ENCODE measurements at regions of chr12 and their contacts with region 1.

Region 1: GRCh38 chr12:3885277-3886094 is 12.3 kb upstream of the PARP11 start:
- DNase-seq: no peak
- H3K4me3 Mint-ChIP-seq: no peak overlapping the region
- H3K27ac Mint-ChIP-seq: no peak overlapping the region
- H3K4me1 Mint-ChIP-seq: peaks cover 14% of the 10 kb centered on the region
- H3K27me3 Mint-ChIP-seq: peaks cover 8% of the 10 kb centered on the region

Region 2: GRCh38 chr12:2550561-2551411 is 1334.7 kb before region 1 on chr12:
- intact Hi-C with region 1: no loop called
- DNase-seq: no peak
- H3K4me3 Mint-ChIP-seq: no peak overlapping the region
- H3K27ac Mint-ChIP-seq: no peak overlapping the region
- H3K4me1 Mint-ChIP-seq: no peaks in the 10 kb centered on the region
- H3K27me3 Mint-ChIP-seq: no peaks in the 10 kb centered on the region

Region 3: DNA sequence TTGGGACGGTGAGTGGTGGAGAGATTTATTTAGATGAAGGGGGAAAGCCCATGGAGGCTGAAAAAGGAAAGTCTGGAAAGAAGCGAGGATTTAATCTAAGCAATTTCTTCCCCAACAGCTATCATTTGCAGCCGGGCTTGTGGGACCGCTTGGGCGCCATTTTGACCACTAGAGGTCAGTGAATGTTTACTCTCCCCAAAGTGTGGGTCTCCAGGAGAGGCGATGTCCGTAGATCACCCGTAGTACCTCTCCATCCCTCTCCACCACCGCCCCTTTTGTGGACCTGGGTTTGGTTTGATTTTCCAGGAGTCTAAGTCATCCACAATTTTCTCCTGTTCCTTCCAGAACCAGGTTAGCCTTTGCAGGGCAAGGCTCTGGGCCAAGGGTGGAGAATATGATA is 79.0 kb after region 1 on chr12:
- intact Hi-C with region 1: loop called (anchors 2 kb)
- DNase-seq: no peak
- H3K4me3 Mint-ChIP-seq: no peak overlapping the region
- H3K27ac Mint-ChIP-seq: no peak overlapping the region
- H3K4me1 Mint-ChIP-seq: peaks cover 31% of the 10 kb centered on the region
- H3K27me3 Mint-ChIP-seq: no peaks in the 10 kb centered on the region

Region 4: GRCh38 chr12:3988519-3989448 is 103.3 kb after region 1 on chr12:
- intact Hi-C with region 1: loop called (anchors 5 kb)
- DNase-seq: no peak
- H3K4me3 Mint-ChIP-seq: peak overlapping the region; percentile 1
- H3K27ac Mint-ChIP-seq: peak overlapping the region; percentile 75
- H3K4me1 Mint-ChIP-seq: peaks cover 28% of the 10 kb centered on the region
- H3K27me3 Mint-ChIP-seq: peaks cover 20% of the 10 kb centered on the region

Region 5: GRCh38 chr12:4037747-4038312 is 152.3 kb after region 1 on chr12:
- intact Hi-C with region 1: loop called (anchors 1 kb)
- DNase-seq: no peak
- H3K4me3 Mint-ChIP-seq: no peak overlapping the region
- H3K27ac Mint-ChIP-seq: no peak overlapping the region
- H3K4me1 Mint-ChIP-seq: no peaks in the 10 kb centered on the region
- H3K27me3 Mint-ChIP-seq: peaks cover 27% of the 10 kb centered on the region

Region 6: GRCh38 chr12:4107436-4107878 is 222.0 kb after region 1 on chr12:
- intact Hi-C with region 1: loop called (anchors 5 kb)
- DNase-seq: peak; percentile 75
- H3K4me3 Mint-ChIP-seq: peak overlapping the region; percentile 10
- H3K27ac Mint-ChIP-seq: peak overlapping the region; percentile 73
- H3K4me1 Mint-ChIP-seq: peaks cover 53% of the 10 kb centered on the region
- H3K27me3 Mint-ChIP-seq: peaks cover 4% of the 10 kb centered on the region

Region 7: DNA sequence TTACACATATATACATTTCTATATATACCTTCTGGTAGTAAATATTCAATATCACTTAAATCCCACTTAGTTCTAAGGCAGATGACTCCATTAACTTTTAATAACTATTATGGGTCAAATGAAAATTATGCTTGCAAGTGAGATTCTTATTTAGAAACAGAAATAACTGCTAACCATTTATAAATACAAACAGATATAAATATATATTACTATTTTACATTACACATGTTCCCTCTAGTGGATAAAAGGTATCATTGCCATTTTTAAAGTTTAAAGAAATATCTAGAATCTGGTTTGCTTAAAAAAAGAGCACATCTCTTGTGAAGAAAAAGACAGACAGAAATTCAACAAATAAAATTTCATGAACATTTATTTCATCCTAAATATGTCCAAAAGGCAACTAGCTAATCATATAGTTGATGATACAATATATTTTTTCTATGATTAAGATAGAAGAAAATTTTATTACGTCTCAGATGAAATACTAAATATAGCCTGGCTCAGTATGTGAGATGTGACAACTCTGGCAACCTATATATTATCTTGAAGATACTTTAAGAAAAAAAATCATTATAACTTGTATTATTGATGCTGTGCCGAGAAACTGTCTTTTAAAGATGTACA is 641.5 kb after region 1 on chr12:
- intact Hi-C with region 1: loop called (anchors 5 kb)
- DNase-seq: no peak
- H3K4me3 Mint-ChIP-seq: no peak overlapping the region
- H3K27ac Mint-ChIP-seq: no peak overlapping the region
- H3K4me1 Mint-ChIP-seq: peaks cover 7% of the 10 kb centered on the region
- H3K27me3 Mint-ChIP-seq: no peaks in the 10 kb centered on the region